Mammary epithelial cell (primary cell): ENCODE measurements at regions of chr15 and their contacts with region 1.

Region 1: GRCh38 chr15:80309769-80310384 is 57.9 kb upstream of the CTXND1 start:
- DNase-seq: peak; percentile 6
- H3K4me3 ChIP-seq: no peak overlapping the region
- H3K27ac ChIP-seq: no peak overlapping the region
- H3K4me1 ChIP-seq: no peaks in the 10 kb centered on the region
- H3K27me3 ChIP-seq: no peaks in the 10 kb centered on the region
- CTCF ChIP-seq: peak; percentile 53 to 73

Region 2: GRCh38 chr15:79769069-79769481 is 540.8 kb before region 1 on chr15:
- CTCF ChIA-PET with region 1: no interaction called
- dilution Hi-C with region 1: no loop called
- in situ Hi-C with region 1: no loop called
- intact Hi-C with region 1: loop called (anchors 1 kb)
- DNase-seq: peak; percentile 26
- H3K4me3 ChIP-seq: no peak overlapping the region
- H3K27ac ChIP-seq: no peak overlapping the region
- H3K4me1 ChIP-seq: no peaks in the 10 kb centered on the region
- H3K27me3 ChIP-seq: no peaks in the 10 kb centered on the region
- CTCF ChIP-seq: peak; percentile 36 to 65

Region 3: DNA sequence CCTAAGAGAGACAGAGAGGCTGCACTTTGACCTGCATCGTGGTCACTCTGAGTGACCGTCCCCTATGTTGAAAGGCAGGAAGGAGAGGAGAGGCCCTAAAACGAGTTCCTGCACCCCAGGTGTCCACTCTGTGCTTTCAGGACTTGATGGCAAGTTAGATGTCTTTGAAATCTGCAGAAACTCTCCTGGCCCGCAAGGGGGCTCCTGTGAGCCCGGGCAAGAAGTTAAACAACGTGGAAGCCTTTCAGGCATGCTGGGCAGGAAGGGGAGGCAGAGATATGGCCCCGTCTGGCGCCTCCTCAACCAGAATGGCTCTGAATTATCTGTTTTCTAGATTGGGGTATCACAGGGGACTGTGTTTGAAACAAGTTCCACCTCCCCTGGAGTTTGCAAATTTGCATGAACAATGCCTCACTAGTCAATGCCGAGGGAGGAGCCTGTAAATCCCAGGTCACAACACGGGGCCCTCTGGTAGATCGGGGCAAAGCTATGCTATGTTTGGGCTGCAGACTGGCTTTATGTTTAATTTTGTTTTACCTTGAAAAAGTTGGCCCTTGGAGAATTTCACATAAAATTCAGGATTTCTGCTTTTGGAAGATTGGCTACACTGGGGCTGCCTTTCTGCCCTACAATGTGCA is 67.6 kb before region 1 on chr15:
- CTCF ChIA-PET with region 1: no interaction called
- dilution Hi-C with region 1: no loop called
- in situ Hi-C with region 1: no loop called
- intact Hi-C with region 1: loop called (anchors 1 kb)
- DNase-seq: peak; percentile 3
- H3K4me3 ChIP-seq: no peak overlapping the region
- H3K27ac ChIP-seq: no peak overlapping the region
- H3K4me1 ChIP-seq: no peaks in the 10 kb centered on the region
- H3K27me3 ChIP-seq: no peaks in the 10 kb centered on the region
- CTCF ChIP-seq: peak; percentile 58 to 70

Region 4: GRCh38 chr15:80289528-80290495 is 20.1 kb before region 1 on chr15:
- CTCF ChIA-PET with region 1: no interaction called
- dilution Hi-C with region 1: no loop called
- in situ Hi-C with region 1: no loop called
- intact Hi-C with region 1: no loop called
- DNase-seq: no peak
- H3K4me3 ChIP-seq: no peak overlapping the region
- H3K27ac ChIP-seq: no peak overlapping the region
- H3K4me1 ChIP-seq: no peaks in the 10 kb centered on the region
- H3K27me3 ChIP-seq: no peaks in the 10 kb centered on the region
- CTCF ChIP-seq: no peak